ENCODE measurements at regions of chr7 and their contacts with region 1.

Region 1: GRCh38 chr7:44748045-44748947 is at the start of gene ZMIZ2:
- DNase-seq: peak; percentile 92 to 94
- H3K4me3 ChIP-seq: peak within 1 kb of the TSS; percentile 88 to 92
- H3K27ac ChIP-seq: peak within 1 kb of the TSS; percentile 83 to 91
- H3K4me1 ChIP-seq: peaks cover 0 to 26% (median 20%) of the 10 kb centered on the region in 4 donors
- H3K27me3 ChIP-seq: no peaks in the 10 kb centered on the region
- CTCF ChIP-seq: no peak

Region 2: GRCh38 chr7:44581879-44582603 is 166.3 kb before region 1 on chr7 and contains the start of gene TMED4:
- intact Hi-C with region 1: loop called (anchors 5 kb)
- DNase-seq: peak; percentile 100
- H3K4me3 ChIP-seq: peak within 1 kb of the TSS; percentile 70 to 83
- H3K27ac ChIP-seq: peak within 1 kb of the TSS; percentile 90 to 96
- H3K4me1 ChIP-seq: peaks cover 0 to 25% (median 17%) of the 10 kb centered on the region in 4 donors
- H3K27me3 ChIP-seq: no peaks in the 10 kb centered on the region
- CTCF ChIP-seq: no peak

Region 3: DNA sequence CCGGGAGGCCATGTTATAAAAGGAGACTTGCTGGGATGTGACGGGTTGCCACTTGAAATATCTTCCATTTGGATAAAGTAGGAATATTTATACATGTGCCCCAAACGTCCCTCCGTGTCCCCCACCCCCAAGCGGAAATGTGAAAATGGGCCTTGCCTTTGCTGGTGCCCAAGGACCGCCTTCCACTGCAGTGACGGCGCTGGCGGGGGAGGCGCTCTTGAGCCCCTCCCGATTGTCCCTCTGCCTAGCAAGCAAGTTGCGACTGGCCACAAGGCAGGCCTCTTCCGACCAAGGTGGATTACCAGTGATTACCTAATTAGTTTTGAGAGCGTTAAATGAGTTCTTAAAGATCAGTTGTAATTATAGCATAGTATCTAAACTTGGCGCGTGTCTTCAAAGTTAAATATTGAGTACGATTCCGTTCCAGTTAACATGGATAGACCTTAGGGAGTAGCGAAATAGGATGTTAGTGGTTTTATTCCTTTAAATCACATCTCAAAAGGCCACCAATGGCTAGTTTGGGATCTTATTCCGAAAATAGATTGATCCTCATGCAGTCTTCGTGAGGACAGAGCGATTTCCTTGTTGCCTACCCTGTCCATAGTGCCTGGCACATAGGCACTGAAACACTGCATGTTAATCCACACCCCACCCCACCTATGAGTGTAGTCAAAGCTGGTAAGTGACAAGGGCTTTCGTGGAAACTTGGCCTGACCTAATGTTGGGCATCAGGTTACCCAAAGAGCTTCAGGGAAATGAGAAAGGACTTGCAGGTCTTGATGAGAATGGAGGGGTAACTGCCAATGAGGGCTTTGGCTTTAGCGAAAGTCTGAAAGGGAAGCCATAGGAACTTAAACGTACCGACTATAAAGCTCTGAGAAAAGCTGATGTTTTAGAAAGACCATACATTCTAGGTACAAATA is 49.3 kb after region 1 on chr7:
- intact Hi-C with region 1: loop called (anchors 1 kb)
- DNase-seq: peak; percentile 92 to 96
- H3K4me3 ChIP-seq: peak overlapping the region; percentile 72 to 88
- H3K27ac ChIP-seq: peak overlapping the region; percentile 94 to 98
- H3K4me1 ChIP-seq: peaks cover 0 to 28% (median 21%) of the 10 kb centered on the region in 4 donors
- H3K27me3 ChIP-seq: no peaks in the 10 kb centered on the region
- CTCF ChIP-seq: peak; percentile 21 to 23

Region 4: GRCh38 chr7:44847508-44847920 is 99.2 kb after region 1 on chr7:
- intact Hi-C with region 1: no loop called
- DNase-seq: peak; percentile 84 to 92
- H3K4me3 ChIP-seq: peak overlapping the region; percentile 55 to 86
- H3K27ac ChIP-seq: peak overlapping the region; percentile 89 to 97
- H3K4me1 ChIP-seq: peaks cover 0 to 33% (median 11%) of the 10 kb centered on the region in 4 donors
- H3K27me3 ChIP-seq: no peaks in the 10 kb centered on the region
- CTCF ChIP-seq: peak; percentile 89 to 90

Region 5: DNA sequence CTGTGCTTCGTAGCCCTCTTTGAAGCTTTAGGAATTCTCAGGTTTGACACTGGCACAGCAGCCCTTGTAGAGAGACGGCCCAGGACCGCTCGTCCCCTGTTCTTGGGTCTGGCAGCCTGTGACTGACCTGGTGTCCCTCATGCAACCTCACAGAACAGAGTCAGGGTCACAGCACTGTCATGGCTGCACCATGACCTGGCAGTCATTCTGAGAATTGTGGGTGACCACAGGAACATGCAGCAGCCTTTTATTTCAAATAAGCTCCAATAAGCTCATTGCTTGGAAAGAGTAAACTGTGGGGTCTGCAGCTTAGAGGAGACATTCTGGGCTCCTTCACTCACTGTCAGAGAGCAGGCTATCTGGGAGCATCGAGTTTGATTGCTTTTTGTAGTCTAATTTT is 188.0 kb after region 1 on chr7:
- intact Hi-C with region 1: no loop called
- DNase-seq: peak in 1 of 2 donors; percentile 23
- H3K4me3 ChIP-seq: no peak overlapping the region
- H3K27ac ChIP-seq: no peak overlapping the region
- H3K4me1 ChIP-seq: no peaks in the 10 kb centered on the region
- H3K27me3 ChIP-seq: peaks cover 0 to 5% of the 10 kb centered on the region in 2 donors
- CTCF ChIP-seq: no peak

Region 6: GRCh38 chr7:45052011-45052410 is 303.7 kb after region 1 on chr7:
- intact Hi-C with region 1: no loop called
- DNase-seq: peak in 1 of 2 donors; percentile 34
- H3K4me3 ChIP-seq: no peak overlapping the region
- H3K27ac ChIP-seq: no peak overlapping the region
- H3K4me1 ChIP-seq: no peaks in the 10 kb centered on the region
- H3K27me3 ChIP-seq: no peaks in the 10 kb centered on the region
- CTCF ChIP-seq: no peak

Measured in tibial artery (tissue), 4 donors.